Caco-2 (cell line): ENCODE measurements at regions of chr3 and their contacts with region 1.

Region 1: GRCh38 chr3:191340976-191341375 is 10.7 kb upstream of the UTS2B start:
- DNase-seq: no peak
- H3K4me3 ChIP-seq: no peak overlapping the region
- H3K4me3 Mint-ChIP-seq: no peak overlapping the region
- H3K27ac Mint-ChIP-seq: no peak overlapping the region
- H3K4me1 ChIP-seq: peaks cover 10% of the 10 kb centered on the region
- H3K4me1 Mint-ChIP-seq: peaks cover 10% of the 10 kb centered on the region
- H3K27me3 ChIP-seq: no peaks in the 10 kb centered on the region
- H3K27me3 Mint-ChIP-seq: no peaks in the 10 kb centered on the region
- CTCF ChIP-seq: no peak

Region 2: DNA sequence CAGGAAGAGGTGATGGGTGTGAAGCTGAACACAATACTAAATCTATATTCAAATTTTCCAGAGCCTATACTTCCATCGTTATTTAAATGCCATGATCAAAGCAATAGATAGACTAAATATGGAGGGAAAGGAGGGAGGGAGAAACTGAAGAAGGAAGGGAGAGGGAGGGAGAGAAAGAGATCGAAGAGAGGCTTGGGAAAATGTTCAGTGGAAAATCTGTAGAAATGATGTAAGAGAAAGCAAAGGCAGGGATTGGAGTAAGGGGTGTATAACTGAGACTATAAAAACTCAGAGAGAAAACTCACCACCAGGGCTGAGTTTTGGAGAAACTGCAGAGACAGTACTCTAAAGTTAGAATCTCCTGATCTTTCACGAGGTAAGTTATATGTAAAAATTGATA is 142.0 kb before region 1 on chr3 and contains the start of gene OSTN:
- CTCF ChIA-PET with region 1: no interaction called
- POLR2A ChIA-PET with region 1: no interaction called
- intact Hi-C with region 1: no loop called
- DNase-seq: no peak
- H3K4me3 ChIP-seq: no peak within 1 kb of the TSS
- H3K4me3 Mint-ChIP-seq: no peak within 1 kb of the TSS
- H3K27ac Mint-ChIP-seq: no peak within 1 kb of the TSS
- H3K4me1 ChIP-seq: no peaks in the 10 kb centered on the region
- H3K4me1 Mint-ChIP-seq: no peaks in the 10 kb centered on the region
- H3K27me3 ChIP-seq: no peaks in the 10 kb centered on the region
- H3K27me3 Mint-ChIP-seq: peaks cover 7% of the 10 kb centered on the region
- CTCF ChIP-seq: no peak
- total RNA-seq, gene OSTN: not detected in 2 replicates

Region 3: DNA sequence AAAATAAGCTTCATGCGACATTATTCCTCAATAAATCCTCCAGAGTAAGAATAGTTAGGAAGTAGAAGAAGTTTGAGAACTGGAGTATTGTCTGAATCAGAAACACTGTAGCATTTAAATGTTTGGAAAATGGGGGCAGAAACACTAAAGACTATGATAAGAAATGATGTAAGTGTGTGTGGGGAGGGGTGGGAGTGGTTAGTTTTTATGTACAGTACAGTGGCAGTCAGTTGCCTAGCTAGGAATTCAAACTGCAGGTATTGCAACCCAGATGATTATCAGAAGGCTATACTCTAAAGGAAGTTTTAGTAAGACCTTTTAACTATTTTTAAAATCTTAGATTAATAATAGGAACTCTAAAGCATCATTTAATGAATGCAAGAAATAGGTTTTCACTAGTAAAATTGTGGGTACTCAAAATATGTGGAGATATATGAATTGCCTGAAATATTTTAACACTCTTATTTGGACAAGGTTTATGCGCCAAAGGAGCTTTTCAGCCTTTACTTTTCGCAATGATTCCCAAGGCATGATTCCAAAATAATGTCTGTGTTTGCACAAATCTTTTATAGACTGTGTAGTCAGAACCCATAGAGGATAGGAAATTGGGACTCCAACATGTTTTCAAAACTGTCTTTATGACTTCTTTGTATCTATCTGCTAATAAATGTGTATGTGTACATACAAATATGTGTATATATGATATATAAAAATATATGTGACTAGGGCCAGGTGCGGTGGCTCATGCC is 19.8 kb before region 1 on chr3:
- CTCF ChIA-PET with region 1: no interaction called
- POLR2A ChIA-PET with region 1: no interaction called
- intact Hi-C with region 1: no loop called
- DNase-seq: no peak
- H3K4me3 ChIP-seq: no peak overlapping the region
- H3K4me3 Mint-ChIP-seq: no peak overlapping the region
- H3K27ac Mint-ChIP-seq: no peak overlapping the region
- H3K4me1 ChIP-seq: peaks cover 11% of the 10 kb centered on the region
- H3K4me1 Mint-ChIP-seq: peaks cover 16% of the 10 kb centered on the region
- H3K27me3 ChIP-seq: no peaks in the 10 kb centered on the region
- H3K27me3 Mint-ChIP-seq: no peaks in the 10 kb centered on the region
- CTCF ChIP-seq: no peak

Region 4: GRCh38 chr3:191356611-191357439 is 15.8 kb after region 1 on chr3:
- CTCF ChIA-PET with region 1: no interaction called
- POLR2A ChIA-PET with region 1: no interaction called
- intact Hi-C with region 1: loop called (anchors 1 kb)
- DNase-seq: no peak
- H3K4me3 ChIP-seq: no peak overlapping the region
- H3K4me3 Mint-ChIP-seq: no peak overlapping the region
- H3K27ac Mint-ChIP-seq: no peak overlapping the region
- H3K4me1 ChIP-seq: peaks cover 15% of the 10 kb centered on the region; the same call in 1 of the 2 replicates
- H3K4me1 Mint-ChIP-seq: peaks cover 16% of the 10 kb centered on the region
- H3K27me3 ChIP-seq: no peaks in the 10 kb centered on the region
- H3K27me3 Mint-ChIP-seq: no peaks in the 10 kb centered on the region
- CTCF ChIP-seq: no peak